Panc1 (cell line): ENCODE measurements at regions of chr5 and their contacts with region 1.

Region 1: GRCh38 chr5:174175716-174176268 is 130.3 kb downstream of the NSG2 start:
- DNase-seq: no peak
- ATAC-seq: no peak
- H3K4me3 ChIP-seq: no peak overlapping the region
- H3K27ac ChIP-seq: no peak overlapping the region
- H3K4me1 ChIP-seq: no peaks in the 10 kb centered on the region
- H3K27me3 ChIP-seq: no peaks in the 10 kb centered on the region
- CTCF ChIP-seq: no peak

Region 2: DNA sequence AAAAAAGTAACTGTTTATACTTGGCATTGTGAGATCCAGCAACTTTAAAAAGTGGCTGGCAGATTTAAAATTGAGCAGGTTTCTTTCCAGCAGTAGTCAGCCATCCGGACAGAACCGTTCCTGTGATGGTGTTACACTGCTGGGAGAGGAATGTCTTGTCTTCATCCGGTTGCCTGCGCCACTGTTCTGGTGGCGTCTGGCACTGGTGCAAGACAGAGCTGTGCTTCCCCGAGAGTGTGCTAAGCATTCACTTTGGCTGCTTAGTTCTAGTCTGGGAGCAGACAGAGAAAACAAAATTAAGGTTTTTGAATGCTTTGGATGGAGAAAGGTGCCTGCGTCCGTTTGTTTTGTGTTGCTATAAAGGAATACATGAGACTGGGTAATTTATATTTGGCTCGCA is 1155.1 kb before region 1 on chr5:
- CTCF ChIA-PET with region 1: no interaction called
- POLR2A ChIA-PET with region 1: no interaction called
- in situ Hi-C with region 1: no loop called
- intact Hi-C with region 1: loop called (anchors 5 kb)
- DNase-seq: no peak
- ATAC-seq: no peak
- H3K4me3 ChIP-seq: no peak overlapping the region
- H3K27ac ChIP-seq: no peak overlapping the region
- H3K4me1 ChIP-seq: peaks cover 13% of the 10 kb centered on the region
- H3K27me3 ChIP-seq: no peaks in the 10 kb centered on the region
- CTCF ChIP-seq: no peak

Region 3: GRCh38 chr5:173997331-173997730 is 178.5 kb before region 1 on chr5:
- CTCF ChIA-PET with region 1: no interaction called
- POLR2A ChIA-PET with region 1: no interaction called
- in situ Hi-C with region 1: no loop called
- intact Hi-C with region 1: no loop called
- DNase-seq: no peak
- ATAC-seq: no peak
- H3K4me3 ChIP-seq: no peak overlapping the region
- H3K27ac ChIP-seq: no peak overlapping the region
- H3K4me1 ChIP-seq: no peaks in the 10 kb centered on the region
- H3K27me3 ChIP-seq: peaks cover 33% of the 10 kb centered on the region; the same call in 1 of the 2 replicates
- CTCF ChIP-seq: no peak

Region 4: GRCh38 chr5:174571662-174572397 is 396.0 kb after region 1 on chr5:
- CTCF ChIA-PET with region 1: no interaction called
- POLR2A ChIA-PET with region 1: no interaction called
- in situ Hi-C with region 1: no loop called
- intact Hi-C with region 1: no loop called
- DNase-seq: peak; percentile 76
- ATAC-seq: peak; percentile 95
- H3K4me3 ChIP-seq: no peak overlapping the region
- H3K27ac ChIP-seq: peak overlapping the region; percentile 44; the same call in 1 of the 2 replicates
- H3K4me1 ChIP-seq: peaks cover 37% of the 10 kb centered on the region
- H3K27me3 ChIP-seq: no peaks in the 10 kb centered on the region
- CTCF ChIP-seq: peak; percentile 39